ENCODE measurements at regions of chr5 and their contacts with region 1.

Region 1: DNA sequence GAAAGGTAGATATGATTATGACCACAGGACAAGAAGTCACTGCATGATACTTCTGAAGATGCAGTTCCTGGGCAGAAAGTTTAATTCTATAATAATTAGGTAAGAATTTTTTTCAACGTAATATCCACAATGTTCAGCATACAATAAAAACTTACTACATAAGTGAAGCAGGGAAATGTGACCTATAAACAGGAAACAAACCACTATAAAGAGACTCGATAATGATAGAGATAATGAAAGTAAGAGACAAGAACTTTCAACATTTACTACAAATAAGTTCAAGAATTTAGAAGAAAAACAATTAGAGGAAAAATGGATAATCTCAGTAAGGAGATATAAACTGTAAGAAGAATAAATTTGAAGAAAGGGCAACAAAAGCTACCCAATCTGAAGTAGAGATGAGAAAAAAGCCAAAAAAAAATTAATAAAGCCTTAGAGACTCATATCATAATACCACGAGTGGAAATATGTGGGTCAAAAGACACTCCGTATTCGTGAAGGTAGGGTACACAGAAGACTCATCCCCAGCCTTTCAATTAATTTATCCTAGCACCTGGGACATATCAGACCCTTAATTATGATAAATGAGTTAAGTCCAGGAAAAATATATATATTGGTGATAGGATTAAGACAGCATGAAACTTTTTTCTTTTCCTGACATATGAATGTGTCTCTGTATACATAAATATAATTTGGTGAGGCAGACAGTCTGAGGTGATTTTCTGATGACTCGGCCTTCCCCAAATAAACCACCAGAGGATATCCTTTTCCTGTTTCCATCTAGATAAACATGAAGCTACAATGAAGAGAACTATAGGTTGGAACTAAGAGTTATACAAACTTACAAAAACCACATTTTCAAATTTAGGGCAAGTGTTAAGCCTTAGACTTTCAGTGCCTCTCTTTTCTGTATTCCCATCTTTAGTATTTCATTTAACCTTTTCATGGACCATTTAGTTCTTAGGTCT is 120.4 kb downstream of the RAPGEF6 start:
- DNase-seq: no peak
- H3K4me3 Mint-ChIP-seq: peak overlapping the region; percentile 65
- H3K27ac Mint-ChIP-seq: peak overlapping the region; percentile 40
- H3K4me1 Mint-ChIP-seq: peaks cover 34% of the 10 kb centered on the region
- H3K27me3 Mint-ChIP-seq: no peaks in the 10 kb centered on the region

Region 2: GRCh38 chr5:131488463-131488862 is 26.1 kb before region 1 on chr5:
- intact Hi-C with region 1: loop called (anchors 2 kb)
- DNase-seq: no peak
- H3K4me3 Mint-ChIP-seq: no peak overlapping the region
- H3K27ac Mint-ChIP-seq: no peak overlapping the region
- H3K4me1 Mint-ChIP-seq: peaks cover 12% of the 10 kb centered on the region
- H3K27me3 Mint-ChIP-seq: no peaks in the 10 kb centered on the region

Region 3: GRCh38 chr5:131548176-131548575 is 33.6 kb after region 1 on chr5:
- intact Hi-C with region 1: loop called (anchors 2 kb)
- DNase-seq: no peak
- H3K4me3 Mint-ChIP-seq: peak overlapping the region; percentile 82
- H3K27ac Mint-ChIP-seq: peak overlapping the region; percentile 83
- H3K4me1 Mint-ChIP-seq: peaks cover 60% of the 10 kb centered on the region
- H3K27me3 Mint-ChIP-seq: no peaks in the 10 kb centered on the region

Measured in activated T-helper 2 cell treated with anti-CD3 and anti-CD28 coated beads, Interferon-gamma antibody, Interleukin-2, Interleukin-4, amounts not matched to agents 10 μg/mL and 5 μg/mL and 100 μg/mL, durations not matched to agents 14 hours and 24 hours and 36 hours (primary cell).